Right cardiac atrium (tissue), 5 donors: ENCODE measurements at regions of chr10 and their contacts with region 1.

Region 1: DNA sequence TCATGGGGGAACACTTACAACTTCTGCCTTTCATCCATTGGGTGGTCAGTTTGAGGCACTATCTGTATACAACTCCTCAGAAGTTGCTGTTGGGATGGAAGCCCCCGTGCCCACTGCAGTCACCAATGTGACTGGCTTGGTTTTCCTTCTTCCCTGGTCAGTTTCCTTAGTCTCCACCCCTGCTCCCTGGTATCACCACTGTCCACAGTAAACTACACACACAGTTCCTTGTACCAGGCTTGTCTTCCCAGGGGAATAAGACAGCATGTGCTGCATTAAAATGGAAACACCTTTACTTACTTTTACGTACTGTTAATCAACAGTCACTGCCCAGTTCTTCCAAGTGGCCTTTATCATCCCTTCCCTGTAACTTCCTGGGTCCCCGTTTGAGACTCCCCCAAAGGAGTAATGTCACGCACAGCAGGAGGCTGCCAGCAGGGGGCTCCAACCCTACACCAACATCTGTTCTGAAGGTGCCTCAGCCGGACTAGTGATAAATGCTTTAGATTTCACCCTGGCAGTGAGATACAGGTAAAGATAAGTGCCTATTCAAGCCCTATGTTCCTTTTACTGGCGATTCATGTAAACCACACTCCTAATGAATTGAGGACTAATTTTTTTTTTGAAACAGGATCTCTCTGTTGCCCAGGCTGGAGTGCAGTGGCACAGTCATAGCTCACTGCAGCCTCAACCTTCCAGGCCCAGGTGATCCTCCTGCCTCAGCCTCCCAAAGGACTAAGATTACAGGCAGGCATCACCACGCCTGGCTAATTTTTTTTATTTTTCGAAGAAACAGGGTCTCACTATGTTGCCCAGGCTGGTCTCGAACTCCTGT is 45.3 kb upstream of the PIK3AP1 start:
- DNase-seq: peak; percentile 60 to 88 (median 84)
- ATAC-seq: peak; percentile 73 to 76
- H3K4me3 ChIP-seq: no peak overlapping the region
- H3K27ac ChIP-seq: no peak overlapping the region
- H3K4me1 ChIP-seq: no peaks in the 10 kb centered on the region
- H3K27me3 ChIP-seq: no peaks in the 10 kb centered on the region

Region 2: DNA sequence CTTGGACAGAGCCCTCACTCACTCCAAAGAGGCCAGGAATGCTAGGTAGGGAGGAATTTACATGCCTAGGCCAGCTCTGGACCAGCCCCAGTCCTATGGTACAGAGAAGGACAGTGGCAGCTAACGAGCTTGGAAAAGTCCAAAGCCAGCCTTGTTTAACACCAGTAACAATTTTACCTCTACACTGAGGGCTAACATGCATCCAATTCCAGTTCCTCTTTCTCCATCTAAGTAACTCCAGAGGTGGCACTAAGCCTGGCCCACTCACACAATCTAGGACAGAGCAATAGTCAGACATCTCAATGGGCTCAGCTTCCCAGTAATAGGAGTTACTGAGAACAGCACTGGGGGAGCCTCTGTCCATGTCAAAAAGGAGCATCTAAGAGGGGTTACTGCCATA is 60.8 kb after region 1 on chr10:
- intact Hi-C with region 1: loop called in 1 of 4 experiments (anchors 10 kb)
- DNase-seq: no peak
- ATAC-seq: no peak
- H3K4me3 ChIP-seq: no peak overlapping the region
- H3K27ac ChIP-seq: no peak overlapping the region
- H3K4me1 ChIP-seq: no peaks in the 10 kb centered on the region
- H3K27me3 ChIP-seq: no peaks in the 10 kb centered on the region